ENCODE measurements at regions of chr11 and their contacts with region 1.

Region 1: DNA sequence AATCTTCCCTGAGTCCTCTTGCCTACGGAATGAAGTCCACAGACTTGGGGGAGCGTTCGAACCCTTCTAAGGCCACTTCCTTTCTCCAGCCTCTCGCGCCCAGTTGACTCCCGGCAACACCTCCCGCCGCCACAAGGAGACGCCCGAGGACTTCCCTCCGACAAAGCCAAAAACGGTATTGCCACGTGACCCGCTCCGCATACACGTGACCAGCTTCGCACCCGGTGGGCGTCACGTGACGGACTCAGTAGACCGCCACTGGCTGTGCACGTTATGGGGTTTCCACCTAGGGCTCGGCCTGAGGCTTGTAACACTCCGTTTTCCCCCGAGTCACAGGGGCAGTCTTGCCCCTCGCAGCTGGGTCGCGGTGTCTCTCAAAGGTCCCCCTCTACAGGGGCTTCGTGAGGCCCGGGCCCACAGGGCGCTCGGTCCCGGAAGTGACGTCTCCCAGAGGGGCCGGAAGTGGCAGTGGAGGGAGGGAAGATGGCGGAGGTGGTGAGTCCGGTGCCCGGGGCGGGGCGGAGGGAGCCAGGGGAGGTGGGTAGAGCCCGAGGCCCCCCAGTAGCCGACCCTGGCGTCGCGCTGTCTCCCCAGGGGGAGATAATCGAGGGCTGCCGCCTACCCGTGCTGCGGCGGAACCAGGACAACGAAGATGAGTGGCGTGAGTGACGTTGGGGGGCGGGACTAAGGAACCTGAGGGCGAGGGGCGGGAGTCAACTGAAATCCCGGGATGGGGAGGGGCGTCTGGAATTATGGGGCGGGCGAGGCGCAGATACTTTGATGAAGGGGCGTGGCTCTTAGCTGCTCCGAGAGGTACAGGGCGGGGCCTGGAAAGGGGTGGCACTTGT is at the start of gene KAT5:
- DNase-seq: peak; percentile 98 to 99 (median 99)
- H3K4me3 ChIP-seq: peak within 1 kb of the TSS; percentile 46 to 88 (median 76)
- H3K27ac ChIP-seq: peak within 1 kb of the TSS; percentile 98 to 99
- H3K4me1 ChIP-seq: peaks cover 2 to 22% (median 13%) of the 10 kb centered on the region in 4 experiments
- H3K27me3 ChIP-seq: no peaks in the 10 kb centered on the region

Region 2: DNA sequence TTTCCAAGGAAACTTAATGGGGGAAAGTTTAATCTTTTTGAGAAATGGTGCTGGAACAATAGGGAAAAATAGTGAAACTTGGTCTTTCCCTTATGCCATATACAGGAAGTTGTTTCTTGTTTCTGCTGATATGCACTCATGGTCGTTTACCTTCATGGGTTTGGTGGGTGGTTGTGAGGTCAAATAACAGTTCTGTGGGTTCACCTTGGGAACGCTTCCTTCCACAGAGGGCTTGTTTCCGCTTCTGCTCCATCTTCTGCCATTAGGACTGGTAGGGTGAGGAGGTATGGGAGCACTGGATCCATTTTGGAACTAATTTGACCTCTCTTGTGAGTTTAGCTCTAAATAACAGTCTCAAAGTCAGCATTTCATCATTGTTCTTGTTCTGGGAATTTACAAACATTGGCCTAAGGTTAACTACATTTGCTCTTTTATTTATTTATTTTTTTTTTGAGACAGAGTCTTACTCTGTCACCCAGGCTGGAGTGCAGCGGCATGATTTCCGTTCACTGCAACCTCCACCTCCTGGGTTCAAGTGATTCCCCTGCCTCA is 31.7 kb before region 1 on chr11:
- CTCF ChIA-PET with region 1: no interaction called
- POLR2A ChIA-PET with region 1: no interaction called
- DNase-seq: no peak
- H3K4me3 ChIP-seq: no peak overlapping the region
- H3K27ac ChIP-seq: no peak overlapping the region
- H3K4me1 ChIP-seq: no peaks in the 10 kb centered on the region
- H3K27me3 ChIP-seq: no peaks in the 10 kb centered on the region

Region 3: GRCh38 chr11:65743928-65744698 is 32.1 kb after region 1 on chr11:
- CTCF ChIA-PET with region 1: no interaction called
- POLR2A ChIA-PET with region 1: no interaction called
- DNase-seq: peak; percentile 6 to 23 (median 21)
- H3K4me3 ChIP-seq: no peak overlapping the region
- H3K27ac ChIP-seq: no peak overlapping the region
- H3K4me1 ChIP-seq: no peaks in the 10 kb centered on the region
- H3K27me3 ChIP-seq: peaks cover 3 to 7% (median 5%) of the 10 kb centered on the region in 5 experiments

Region 4: GRCh38 chr11:65817835-65818742 is 106.1 kb after region 1 on chr11:
- CTCF ChIA-PET with region 1: interaction called, 30 read pairs
- POLR2A ChIA-PET with region 1: interaction called, 3 read pairs
- DNase-seq: peak; percentile 87 to 93 (median 92)
- H3K4me3 ChIP-seq: peak overlapping the region; percentile 50 to 89 (median 75)
- H3K27ac ChIP-seq: peak overlapping the region in 1 of 2 experiments; percentile 62
- H3K4me1 ChIP-seq: peaks cover 3 to 17% (median 15%) of the 10 kb centered on the region in 4 experiments
- H3K27me3 ChIP-seq: no peaks in the 10 kb centered on the region

Measured in common myeloid progenitor, CD34-positive (primary cell).